Calu3 (cell line): ENCODE measurements at regions of chr1 and their contacts with region 1.

Region 1: DNA sequence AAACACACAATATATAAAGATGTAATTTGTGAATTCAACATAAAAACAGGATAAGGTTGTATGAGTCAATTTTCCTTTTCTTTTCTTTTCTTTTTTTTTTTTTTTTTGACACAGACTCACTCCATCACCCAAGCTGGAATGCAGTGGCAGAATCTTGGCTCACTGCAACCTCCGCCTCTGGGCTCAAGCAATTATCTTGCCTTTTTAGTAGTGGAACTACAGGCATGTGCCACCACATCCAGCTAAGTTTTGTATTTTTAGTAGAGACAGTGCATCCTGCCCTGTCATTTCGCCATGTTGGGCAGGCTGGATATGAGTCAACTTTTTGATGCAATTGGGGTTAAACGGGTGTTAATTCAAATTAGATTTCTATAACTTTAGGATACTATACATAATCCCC is 10.3 kb upstream of the SPRR2B start:
- DNase-seq: no peak
- H3K4me3 Mint-ChIP-seq: no peak overlapping the region
- H3K27ac Mint-ChIP-seq: no peak overlapping the region
- H3K4me1 Mint-ChIP-seq: peaks cover 11% of the 10 kb centered on the region
- H3K27me3 Mint-ChIP-seq: no peaks in the 10 kb centered on the region
- CTCF ChIP-seq: no peak

Region 2: DNA sequence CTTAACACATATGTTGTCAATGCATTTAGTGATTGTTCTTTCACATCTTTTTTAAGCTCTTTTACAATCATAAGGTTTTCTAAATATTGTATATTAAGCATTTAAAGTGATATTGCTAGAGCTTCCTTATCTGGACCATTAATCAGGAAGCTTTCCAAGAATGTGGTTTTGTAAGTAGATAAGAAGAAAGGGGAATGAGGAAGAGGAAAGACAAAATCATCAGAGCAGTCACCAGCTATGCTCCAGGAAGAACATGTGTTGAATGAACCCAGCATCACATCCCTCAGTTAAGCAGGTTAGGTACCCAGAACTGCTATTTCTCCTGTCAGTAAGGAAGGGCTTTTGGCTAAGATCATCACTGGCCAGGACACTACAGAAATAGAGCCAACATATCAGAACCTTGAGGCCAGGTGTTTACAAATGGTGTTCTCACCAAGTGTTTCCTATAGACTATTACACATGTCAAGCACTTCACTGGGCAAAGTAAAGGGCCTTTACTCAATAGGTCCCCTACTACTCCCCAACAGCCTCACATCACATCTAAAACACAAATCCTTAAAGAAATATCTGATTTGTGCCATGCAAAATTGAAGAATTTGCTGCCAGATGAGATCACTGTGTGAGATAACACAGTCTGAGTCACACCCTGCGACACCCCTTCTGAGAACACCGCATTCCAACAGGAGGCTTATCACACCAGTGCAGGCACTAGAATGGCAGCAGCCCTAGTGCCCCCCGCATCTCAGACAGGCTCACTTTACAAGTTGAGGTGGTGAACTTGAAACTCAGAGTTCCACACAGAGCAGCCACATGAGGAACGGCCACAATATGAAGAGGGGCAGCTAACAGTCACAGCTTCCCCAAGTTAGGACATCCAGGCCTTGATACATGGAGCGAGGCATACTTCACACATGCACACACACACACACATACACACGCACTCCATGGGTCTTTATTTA is 22.6 kb before region 1 on chr1:
- CTCF ChIA-PET with region 1: no interaction called
- intact Hi-C with region 1: loop called (anchors 2 kb)
- DNase-seq: peak; percentile 62
- H3K4me3 Mint-ChIP-seq: no peak overlapping the region
- H3K27ac Mint-ChIP-seq: peak overlapping the region; percentile 16
- H3K4me1 Mint-ChIP-seq: peaks cover 26% of the 10 kb centered on the region
- H3K27me3 Mint-ChIP-seq: no peaks in the 10 kb centered on the region
- CTCF ChIP-seq: no peak